Left colon (tissue), 2 donors: ENCODE measurements at regions of chr21 and their contacts with region 1.

Region 1: DNA sequence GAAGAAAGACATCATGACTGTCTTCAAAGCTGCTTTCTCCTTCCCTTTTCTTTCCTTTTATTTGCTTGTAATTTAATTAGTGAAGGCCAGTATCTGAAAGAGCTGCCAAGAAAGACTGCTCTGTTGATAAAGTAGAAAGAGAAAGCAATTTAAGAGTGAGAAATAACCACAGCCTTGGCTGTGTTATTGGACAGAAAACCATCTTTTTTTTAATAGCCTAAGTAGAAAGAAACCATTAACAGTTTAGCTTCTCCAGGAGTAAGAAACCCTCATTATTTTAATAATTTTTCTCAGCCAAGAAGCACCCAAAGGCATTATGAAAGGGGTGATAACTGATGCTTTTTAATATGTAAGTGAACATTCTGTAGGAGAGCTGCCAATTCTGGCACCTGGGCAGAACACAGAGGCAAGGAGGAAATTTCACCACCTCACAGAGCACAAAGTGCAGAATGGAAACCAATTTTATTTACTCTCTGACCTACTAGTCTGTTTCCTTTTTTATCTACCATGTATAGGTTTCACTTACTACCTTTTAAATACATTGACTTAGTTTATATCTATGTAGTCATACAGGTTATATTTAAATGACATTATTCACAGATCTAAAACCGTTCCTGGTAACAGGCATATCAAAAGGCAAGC is 703.2 kb downstream of the MRPL39 start:
- DNase-seq: no peak
- ATAC-seq: no peak

Region 2: GRCh38 chr21:25385911-25386474 is 481.9 kb after region 1 on chr21:
- intact Hi-C with region 1: loop called in 1 of 2 experiments (anchors 10 kb)
- DNase-seq: peak in 1 of 2 donors; percentile 10
- ATAC-seq: peak; percentile 54